Panc1 (cell line): ENCODE measurements at regions of chr12 and their contacts with region 1.

Region 1: DNA sequence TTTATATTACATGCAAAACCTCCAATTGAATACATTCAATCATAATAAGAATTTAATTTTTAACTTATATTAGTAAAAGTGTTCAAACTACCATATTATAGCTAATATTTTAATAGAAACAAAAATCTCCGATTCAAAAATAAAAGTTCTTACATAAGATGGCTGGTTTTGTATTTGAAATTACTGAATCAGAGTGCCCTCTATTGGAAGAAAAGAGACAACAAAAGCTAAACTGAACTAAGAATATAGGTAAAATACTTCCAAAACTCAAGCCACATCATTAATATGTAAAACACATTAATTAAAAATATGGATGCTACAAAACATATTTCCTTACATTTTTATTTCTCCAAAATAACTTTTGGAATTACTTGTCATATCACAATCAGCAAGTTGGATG is 120.3 kb downstream of the GARIN6 start:
- DNase-seq: no peak
- ATAC-seq: no peak
- H3K4me3 ChIP-seq: no peak overlapping the region
- H3K27ac ChIP-seq: no peak overlapping the region
- H3K4me1 ChIP-seq: no peaks in the 10 kb centered on the region
- H3K27me3 ChIP-seq: no peaks in the 10 kb centered on the region
- CTCF ChIP-seq: peak; percentile 30; the same call in 1 of the 2 replicates

Region 2: GRCh38 chr12:99043319-99043914 is 724.4 kb before region 1 on chr12:
- CTCF ChIA-PET with region 1: no interaction called
- POLR2A ChIA-PET with region 1: no interaction called
- in situ Hi-C with region 1: no loop called
- intact Hi-C with region 1: loop called (anchors 5 kb)
- DNase-seq: peak; percentile 43
- ATAC-seq: no peak
- H3K4me3 ChIP-seq: no peak overlapping the region
- H3K27ac ChIP-seq: no peak overlapping the region
- H3K4me1 ChIP-seq: no peaks in the 10 kb centered on the region
- H3K27me3 ChIP-seq: no peaks in the 10 kb centered on the region
- CTCF ChIP-seq: peak; percentile 87

Region 3: GRCh38 chr12:99334285-99335056 is 433.3 kb before region 1 on chr12:
- CTCF ChIA-PET with region 1: no interaction called
- POLR2A ChIA-PET with region 1: interaction called, 13 read pairs
- in situ Hi-C with region 1: no loop called
- intact Hi-C with region 1: no loop called
- DNase-seq: no peak
- ATAC-seq: no peak
- H3K4me3 ChIP-seq: no peak overlapping the region
- H3K27ac ChIP-seq: no peak overlapping the region
- H3K4me1 ChIP-seq: no peaks in the 10 kb centered on the region
- H3K27me3 ChIP-seq: no peaks in the 10 kb centered on the region
- CTCF ChIP-seq: no peak

Region 4: GRCh38 chr12:99374023-99374422 is 393.8 kb before region 1 on chr12:
- CTCF ChIA-PET with region 1: no interaction called
- POLR2A ChIA-PET with region 1: no interaction called
- in situ Hi-C with region 1: no loop called
- intact Hi-C with region 1: no loop called
- DNase-seq: no peak
- ATAC-seq: no peak
- H3K4me3 ChIP-seq: no peak overlapping the region
- H3K27ac ChIP-seq: no peak overlapping the region
- H3K4me1 ChIP-seq: no peaks in the 10 kb centered on the region
- H3K27me3 ChIP-seq: no peaks in the 10 kb centered on the region
- CTCF ChIP-seq: no peak

Region 5: GRCh38 chr12:99386907-99387306 is 380.9 kb before region 1 on chr12:
- CTCF ChIA-PET with region 1: interaction called, 3 read pairs
- POLR2A ChIA-PET with region 1: no interaction called
- in situ Hi-C with region 1: no loop called
- intact Hi-C with region 1: loop called (anchors 5 kb)
- DNase-seq: no peak
- ATAC-seq: no peak
- H3K4me3 ChIP-seq: no peak overlapping the region
- H3K27ac ChIP-seq: no peak overlapping the region
- H3K4me1 ChIP-seq: no peaks in the 10 kb centered on the region
- H3K27me3 ChIP-seq: no peaks in the 10 kb centered on the region
- CTCF ChIP-seq: peak; percentile 47